GM10248 (cell line): ENCODE measurements at regions of chr15 and their contacts with region 1.

Region 1: GRCh38 chr15:40873625-40874561 is at the start of gene RHOV:
- DNase-seq: peak; percentile 84
- CTCF ChIP-seq: peak; percentile 68

Region 2: DNA sequence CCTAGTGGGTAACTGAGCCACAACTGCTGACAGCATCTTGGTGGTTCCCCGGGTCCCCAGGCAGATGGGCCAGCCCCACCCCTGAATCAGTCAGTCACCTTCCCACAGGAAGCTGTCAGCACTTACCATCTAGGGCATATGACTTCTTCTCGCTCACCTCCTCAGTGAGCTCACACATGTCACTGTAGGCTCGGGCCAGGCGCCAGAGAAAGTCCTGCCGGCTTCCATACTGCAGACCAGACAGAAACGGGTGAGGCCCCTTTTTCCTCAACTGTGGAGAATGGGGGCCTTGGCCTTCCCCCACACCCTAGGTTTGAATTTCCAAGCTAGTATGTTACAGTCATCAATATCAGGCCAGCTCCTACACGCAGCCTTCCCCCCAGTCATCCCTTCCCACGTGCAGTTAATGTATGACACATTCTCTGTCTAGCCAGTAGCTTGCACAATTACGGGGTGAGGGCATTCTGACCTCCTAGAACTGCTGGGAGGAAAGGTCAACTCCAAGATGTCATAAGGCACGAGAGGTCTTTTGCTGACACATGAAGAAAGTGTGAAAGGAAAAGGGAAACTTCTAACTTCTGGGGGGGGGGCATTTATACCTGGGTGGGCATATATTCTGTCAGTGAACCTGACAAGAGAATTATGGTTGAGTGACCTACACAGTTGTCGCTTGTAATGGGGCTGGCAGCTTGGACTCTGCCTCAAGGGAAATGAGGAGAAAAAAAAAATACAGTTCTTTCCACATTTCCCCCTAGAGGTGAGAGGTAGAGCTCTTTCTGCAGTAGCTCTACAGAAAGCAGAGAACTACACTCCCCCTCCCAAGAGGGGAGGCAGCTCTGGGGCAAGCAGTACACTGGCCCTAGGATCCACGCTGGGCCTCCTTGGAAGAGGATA is 129.7 kb before region 1 on chr15:
- CTCF ChIA-PET with region 1: no interaction called
- POLR2A ChIA-PET with region 1: no interaction called
- DNase-seq: no peak
- CTCF ChIP-seq: no peak

Region 3: DNA sequence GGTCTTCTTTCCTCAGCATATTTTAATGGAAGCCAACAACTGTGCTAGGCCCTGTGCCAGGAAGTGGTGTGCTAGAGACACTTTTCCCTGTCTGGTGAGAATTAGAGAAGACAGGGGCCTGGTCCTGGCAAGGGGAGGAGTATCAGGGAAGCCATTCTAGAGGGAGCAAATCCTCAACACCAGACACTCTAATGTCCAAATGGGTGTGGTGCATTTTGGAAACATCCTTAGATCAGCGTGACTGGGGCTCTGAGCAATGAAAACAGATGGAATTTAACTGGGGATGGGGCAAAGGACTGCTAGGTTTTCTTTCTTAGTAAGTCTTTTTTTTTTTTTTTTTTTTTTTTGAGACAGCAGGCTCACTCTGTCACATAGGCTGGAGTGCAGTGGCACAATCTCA is 12.7 kb after region 1 on chr15:
- CTCF ChIA-PET with region 1: interaction called, 294 read pairs
- POLR2A ChIA-PET with region 1: interaction called, 12 read pairs
- DNase-seq: no peak
- CTCF ChIP-seq: no peak